ENCODE measurements at regions of chr6 and their contacts with region 1.

Region 1: DNA sequence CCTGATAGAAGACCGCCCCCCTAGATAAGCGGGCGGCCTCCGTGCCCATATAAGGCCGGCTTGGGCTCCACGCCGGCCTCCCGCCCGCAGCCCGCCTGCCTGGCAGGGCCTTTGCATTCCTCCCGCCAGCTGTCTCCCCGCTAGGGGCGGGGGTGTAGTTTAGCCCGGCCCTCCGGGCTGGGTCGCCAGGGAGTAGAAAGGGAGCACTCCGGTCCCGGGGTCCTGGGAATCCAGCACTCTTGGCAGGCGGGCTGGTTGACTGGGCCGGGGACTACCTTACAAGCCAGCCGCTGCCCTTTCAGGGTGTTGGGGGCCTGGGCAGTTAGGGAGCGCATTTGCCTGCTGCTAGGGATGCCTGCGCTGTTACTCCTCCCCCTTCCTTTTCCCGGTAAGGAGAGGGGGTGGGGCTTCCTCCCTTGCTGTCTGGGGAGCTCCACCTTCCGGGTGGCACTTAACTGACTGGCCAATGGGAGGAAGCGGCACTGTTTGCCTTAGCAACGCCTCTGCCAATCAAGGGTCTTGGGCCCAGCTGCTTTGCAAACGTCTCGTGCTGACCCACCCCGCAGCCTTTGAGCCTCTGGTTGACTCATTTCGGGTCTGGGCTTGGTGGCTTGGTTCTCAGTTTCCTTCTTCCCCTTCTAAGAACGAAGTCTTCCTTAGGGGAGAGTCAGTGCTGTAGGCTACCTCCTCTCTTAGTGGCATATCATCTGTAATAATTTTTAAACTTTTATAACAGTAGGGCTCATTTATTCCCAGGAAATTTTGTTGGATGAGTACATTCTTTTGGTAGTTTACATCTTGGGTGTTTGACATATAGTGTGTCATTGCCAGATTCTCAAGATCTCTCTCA is 3.4 kb downstream of the SRF start:
- DNase-seq: peak; percentile 96 to 98
- H3K4me3 ChIP-seq: peak overlapping the region; percentile 49; the same call in 1 of the 2 replicates
- H3K27ac ChIP-seq: peak overlapping the region; percentile 40
- H3K4me1 ChIP-seq: peaks cover 29% of the 10 kb centered on the region
- H3K27me3 ChIP-seq: no peaks in the 10 kb centered on the region
- CTCF ChIP-seq: no peak

Region 2: DNA sequence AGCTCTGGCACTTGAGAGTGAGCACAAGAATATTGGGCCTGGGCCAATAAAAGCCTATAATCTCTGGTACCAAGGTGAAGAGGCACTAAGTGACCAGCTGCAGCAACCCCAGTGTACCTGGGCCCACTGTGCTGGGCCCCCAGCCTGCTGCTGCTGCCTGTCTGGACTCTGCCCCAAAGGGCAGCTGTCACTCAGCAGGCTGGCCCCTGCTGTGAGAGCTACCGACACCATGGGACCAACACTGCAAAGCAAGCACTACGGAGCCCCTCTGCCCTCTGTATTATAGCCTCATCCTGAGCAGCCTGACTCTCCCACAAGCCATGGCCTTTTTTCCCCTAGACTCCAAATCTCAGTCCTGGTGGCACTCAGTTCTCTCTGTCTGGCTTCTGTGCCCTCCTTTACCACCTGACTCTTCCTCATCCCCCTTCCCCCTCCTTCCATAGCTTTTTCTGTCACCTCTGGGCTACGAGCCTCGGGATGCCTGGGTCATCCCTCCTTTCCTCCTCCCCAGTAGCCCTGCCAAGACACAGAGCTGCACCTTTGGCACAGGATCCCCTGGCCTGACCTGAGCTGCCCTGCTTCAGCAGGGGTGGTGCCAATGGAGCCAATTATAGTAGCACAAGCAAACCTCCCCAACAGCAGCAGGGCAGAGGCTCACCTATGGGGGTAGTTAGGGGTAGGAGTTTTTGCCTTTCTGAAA is 138.8 kb before region 1 on chr6:
- CTCF ChIA-PET with region 1: no interaction called
- POLR2A ChIA-PET with region 1: no interaction called
- intact Hi-C with region 1: no loop called
- DNase-seq: no peak
- H3K4me3 ChIP-seq: no peak overlapping the region
- H3K27ac ChIP-seq: no peak overlapping the region
- H3K4me1 ChIP-seq: no peaks in the 10 kb centered on the region
- H3K27me3 ChIP-seq: no peaks in the 10 kb centered on the region
- CTCF ChIP-seq: no peak

Region 3: DNA sequence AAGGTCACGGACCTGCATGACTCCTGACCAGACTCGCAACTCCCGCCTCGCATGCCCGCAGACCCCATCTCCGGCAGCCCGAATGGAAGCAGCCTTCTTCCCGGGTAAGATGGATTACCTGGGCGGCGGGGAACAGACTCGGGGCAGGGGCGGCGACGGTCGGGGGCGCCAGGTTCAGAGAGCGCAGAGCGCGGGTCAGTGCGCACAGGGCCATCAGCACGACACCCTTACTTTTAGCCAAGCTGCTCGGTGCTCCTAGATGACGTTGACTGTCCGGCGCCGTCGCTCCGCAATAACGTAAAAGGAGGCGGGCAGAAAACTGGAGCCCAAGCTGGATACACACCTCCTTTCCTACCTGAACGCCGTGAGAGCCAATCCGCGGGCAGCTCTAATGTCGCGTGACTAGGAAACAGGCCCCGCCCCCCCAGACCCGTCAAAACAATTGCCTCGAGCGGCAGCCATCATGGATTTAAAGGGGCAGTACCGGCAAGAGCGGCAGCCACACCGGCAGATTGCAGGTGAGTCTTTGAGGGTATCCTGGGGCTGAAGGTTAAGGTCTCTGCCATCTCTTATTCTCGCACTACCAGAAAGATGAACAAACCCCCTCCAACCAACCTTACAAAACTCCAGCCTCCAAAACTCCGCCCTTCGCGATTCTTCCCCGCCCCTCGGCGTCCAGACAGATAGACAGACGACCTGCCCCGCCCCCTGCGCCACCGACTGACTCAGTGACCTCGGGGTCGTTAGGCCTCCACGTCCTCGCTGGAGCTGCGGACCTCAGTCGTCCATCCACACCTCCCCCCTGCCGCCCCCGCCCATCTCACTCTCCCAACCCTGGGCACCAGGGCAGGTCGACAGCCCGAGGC is 115.1 kb before region 1 on chr6 and contains the starts of genes KLC4 and MRPL2:
- CTCF ChIA-PET with region 1: interaction called, 5 read pairs
- POLR2A ChIA-PET with region 1: interaction called, 7 read pairs
- intact Hi-C with region 1: loop called (anchors 1 kb)
- DNase-seq: peak; percentile 94 to 95
- H3K4me3 ChIP-seq: peak within 1 kb of the TSS; percentile 80
- H3K27ac ChIP-seq: peak within 1 kb of the TSS; percentile 61
- H3K4me1 ChIP-seq: peaks cover 22% of the 10 kb centered on the region
- H3K27me3 ChIP-seq: no peaks in the 10 kb centered on the region
- CTCF ChIP-seq: no peak
- total RNA-seq, gene KLC4: 46.2 and 46.7 TPM in 2 replicates
- total RNA-seq, gene MRPL2: 86.2 and 110 TPM in 2 replicates

Region 4: GRCh38 chr6:43096451-43097097 is 77.9 kb before region 1 on chr6:
- CTCF ChIA-PET with region 1: no interaction called
- POLR2A ChIA-PET with region 1: interaction called, 10 read pairs
- intact Hi-C with region 1: no loop called
- DNase-seq: peak; percentile 89 to 98
- H3K4me3 ChIP-seq: peak overlapping the region; percentile 47; the same call in 1 of the 2 replicates
- H3K27ac ChIP-seq: peak overlapping the region; percentile 89
- H3K4me1 ChIP-seq: peaks cover 60% of the 10 kb centered on the region
- H3K27me3 ChIP-seq: no peaks in the 10 kb centered on the region
- CTCF ChIP-seq: no peak; the same call in 1 of the 2 replicates

Region 5: DNA sequence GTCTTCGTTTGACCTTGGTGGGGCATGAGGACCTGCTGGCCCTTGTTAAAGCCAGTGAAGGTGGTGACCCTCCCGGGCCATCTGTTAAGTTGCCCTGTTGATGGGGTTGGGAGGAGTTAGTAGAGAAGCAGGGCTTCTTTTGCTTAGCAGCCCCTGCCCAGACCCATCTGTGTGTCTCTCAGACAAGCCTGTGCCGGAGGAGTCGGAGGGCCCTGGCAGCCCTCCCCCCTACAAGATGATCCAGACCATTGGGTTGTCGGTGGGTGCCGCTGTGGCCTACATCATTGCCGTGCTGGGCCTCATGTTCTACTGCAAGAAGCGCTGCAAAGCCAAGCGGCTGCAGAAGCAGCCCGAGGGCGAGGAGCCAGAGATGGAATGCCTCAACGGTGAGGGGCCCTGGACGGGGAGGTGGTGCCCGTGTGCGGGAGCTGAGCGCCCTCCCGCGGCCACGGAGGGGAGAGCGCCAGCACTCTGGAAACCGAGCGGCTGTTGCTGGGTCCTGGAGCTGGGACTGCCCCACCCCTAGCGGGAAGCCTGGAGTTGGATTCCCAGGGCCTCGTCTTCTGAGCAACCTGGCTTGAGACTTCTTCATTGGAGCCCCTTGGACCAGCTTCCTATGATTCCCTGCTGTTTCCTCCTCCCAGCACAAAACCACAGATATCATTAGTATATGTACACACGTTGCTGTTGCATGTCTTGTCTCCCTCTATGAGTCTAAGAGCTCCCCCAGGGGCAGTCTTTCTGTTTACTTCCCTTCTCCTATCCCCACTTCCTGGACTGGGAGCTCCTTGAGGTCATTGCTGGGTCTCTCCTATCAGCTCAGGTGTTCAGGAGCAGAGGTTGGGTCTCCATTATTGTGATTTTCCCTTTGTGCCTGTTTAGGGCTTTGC is 31.0 kb before region 1 on chr6:
- CTCF ChIA-PET with region 1: no interaction called
- POLR2A ChIA-PET with region 1: no interaction called
- intact Hi-C with region 1: no loop called
- DNase-seq: peak; percentile 61 to 87
- H3K4me3 ChIP-seq: no peak overlapping the region
- H3K27ac ChIP-seq: no peak overlapping the region
- H3K4me1 ChIP-seq: no peaks in the 10 kb centered on the region
- H3K27me3 ChIP-seq: no peaks in the 10 kb centered on the region
- CTCF ChIP-seq: peak; percentile 94

Region 6: GRCh38 chr6:43369174-43370022 is 194.9 kb after region 1 on chr6 and contains the start of gene ZNF318:
- CTCF ChIA-PET with region 1: no interaction called
- POLR2A ChIA-PET with region 1: no interaction called
- intact Hi-C with region 1: loop called (anchors 5 kb)
- DNase-seq: peak; percentile 86 to 96
- H3K4me3 ChIP-seq: peak within 1 kb of the TSS; percentile 71
- H3K27ac ChIP-seq: peak within 1 kb of the TSS; percentile 85
- H3K4me1 ChIP-seq: peaks cover 34% of the 10 kb centered on the region
- H3K27me3 ChIP-seq: no peaks in the 10 kb centered on the region
- CTCF ChIP-seq: no peak
- total RNA-seq, gene ZNF318: 14.9 and 17.1 TPM in 2 replicates

Region 7: DNA sequence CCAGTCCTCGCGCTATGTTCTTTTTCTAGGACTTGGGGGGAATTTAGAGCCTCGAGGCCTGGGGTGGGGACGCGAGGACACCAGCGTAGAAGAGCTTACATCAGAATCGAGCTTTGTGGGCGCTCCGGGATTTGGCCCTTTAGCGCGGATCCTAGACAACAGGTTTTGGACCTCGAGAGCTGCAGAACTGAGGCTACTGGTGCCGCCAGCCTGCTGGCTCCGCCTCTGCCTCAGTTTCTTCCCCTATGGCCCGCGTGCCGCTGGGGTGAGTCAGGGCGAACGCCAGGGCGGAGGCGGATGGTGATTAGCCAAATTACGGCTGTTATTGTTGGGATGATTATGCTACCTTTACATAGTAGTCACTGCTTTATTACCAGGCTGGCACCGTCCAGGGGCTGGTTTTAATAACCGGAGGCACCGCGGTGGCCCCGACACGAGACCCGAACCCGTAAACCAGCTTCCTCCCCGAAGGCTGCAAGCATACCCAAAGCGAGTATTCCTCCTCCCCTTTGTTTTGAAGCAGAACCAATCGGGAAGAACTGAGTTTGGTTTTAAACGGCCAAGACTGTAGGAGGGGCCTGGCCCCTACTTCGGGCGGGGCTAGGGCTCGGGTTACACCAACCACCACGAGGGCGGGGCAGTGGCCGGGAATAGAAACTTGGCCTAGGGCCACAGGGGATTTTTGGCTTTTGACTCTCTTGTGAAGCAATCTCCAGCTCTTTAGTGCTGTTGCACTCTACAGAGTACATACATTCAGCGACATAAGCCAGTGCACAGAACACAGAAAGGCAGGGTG is 455.2 kb after region 1 on chr6:
- CTCF ChIA-PET with region 1: no interaction called
- POLR2A ChIA-PET with region 1: no interaction called
- intact Hi-C with region 1: loop called (anchors 5 kb)
- DNase-seq: peak; percentile 96 to 97
- H3K4me3 ChIP-seq: peak overlapping the region; percentile 93
- H3K27ac ChIP-seq: peak overlapping the region; percentile 97
- H3K4me1 ChIP-seq: peaks cover 34% of the 10 kb centered on the region
- H3K27me3 ChIP-seq: no peaks in the 10 kb centered on the region
- CTCF ChIP-seq: no peak